Pancreas (tissue), 10 donors: ENCODE measurements at regions of chrX and their contacts with region 1.

Region 1: DNA sequence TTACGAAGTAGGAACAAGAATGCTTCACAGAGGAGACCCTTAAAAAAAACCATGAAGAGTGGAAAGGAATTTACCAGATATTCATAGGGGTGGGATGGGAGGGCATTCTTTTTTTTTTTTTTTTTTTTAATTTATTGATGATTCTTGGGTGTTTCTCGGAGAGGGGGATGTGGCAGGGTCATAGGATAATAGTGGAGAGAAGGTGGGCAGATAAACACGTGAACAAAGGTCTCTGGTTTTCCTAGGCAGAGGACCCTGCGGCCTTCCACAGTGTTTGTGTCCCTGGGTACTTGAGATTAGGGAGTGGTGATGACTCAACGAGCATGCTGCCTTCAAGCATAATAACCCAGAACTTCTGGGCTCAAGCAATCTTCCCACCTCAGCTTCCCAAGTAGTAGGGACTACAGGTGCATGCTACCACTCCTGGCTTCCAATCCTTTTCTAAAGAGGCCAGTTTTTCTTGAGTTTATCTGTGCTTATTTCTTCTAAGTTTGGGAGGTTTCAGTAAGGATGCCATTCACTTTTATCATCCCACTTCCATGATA is 65.9 kb upstream of the OGT start:
- DNase-seq: no peak
- ATAC-seq: no peak
- H3K4me3 ChIP-seq: no peak overlapping the region
- H3K27ac ChIP-seq: no peak overlapping the region
- H3K4me1 ChIP-seq: no peaks in the 10 kb centered on the region
- H3K27me3 ChIP-seq: no peaks in the 10 kb centered on the region
- CTCF ChIP-seq: no peak

Region 2: GRCh38 chrX:71525316-71525715 is 58.3 kb after region 1 on chrX:
- intact Hi-C with region 1: loop called in 1 of 3 experiments (anchors 10 kb)
- DNase-seq: no peak
- ATAC-seq: no peak
- H3K4me3 ChIP-seq: no peak overlapping the region
- H3K27ac ChIP-seq: no peak overlapping the region
- H3K4me1 ChIP-seq: no peaks in the 10 kb centered on the region
- H3K27me3 ChIP-seq: no peaks in the 10 kb centered on the region
- CTCF ChIP-seq: no peak